ENCODE measurements at regions of chr16 and their contacts with region 1.

Region 1: GRCh38 chr16:2121853-2122252 is 13.8 kb downstream of the PKD1 start:
- DNase-seq: no peak
- H3K4me3 ChIP-seq: no peak overlapping the region
- H3K4me3 Mint-ChIP-seq: no peak overlapping the region
- H3K27ac Mint-ChIP-seq: no peak overlapping the region
- H3K4me1 ChIP-seq: no peaks in the 10 kb centered on the region
- H3K4me1 Mint-ChIP-seq: no peaks in the 10 kb centered on the region
- H3K27me3 ChIP-seq: no peaks in the 10 kb centered on the region
- H3K27me3 Mint-ChIP-seq: no peaks in the 10 kb centered on the region
- CTCF ChIP-seq: no peak

Region 2: DNA sequence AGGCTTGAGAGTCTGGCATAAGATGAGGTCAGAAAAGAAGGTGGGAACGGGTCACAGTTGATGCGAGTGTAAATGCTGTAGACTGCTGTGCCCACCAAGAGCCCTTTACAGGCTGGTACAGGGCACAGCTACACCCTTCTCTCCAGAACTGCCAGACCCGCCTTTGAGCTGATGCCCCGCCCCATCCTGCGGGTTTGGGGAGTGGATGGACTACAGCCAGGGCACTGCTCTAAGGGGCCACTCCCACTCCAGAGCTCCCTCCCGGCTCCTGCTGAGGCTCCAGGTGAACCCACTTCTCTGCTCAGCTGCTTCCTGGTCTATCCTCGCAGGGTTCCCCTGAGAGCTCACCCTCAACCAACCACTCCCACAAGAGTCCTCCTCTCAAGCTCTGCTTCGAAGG is 262.2 kb before region 1 on chr16:
- CTCF ChIA-PET with region 1: no interaction called
- POLR2A ChIA-PET with region 1: no interaction called
- intact Hi-C with region 1: no loop called
- DNase-seq: no peak
- H3K4me3 ChIP-seq: no peak overlapping the region
- H3K4me3 Mint-ChIP-seq: no peak overlapping the region
- H3K27ac Mint-ChIP-seq: no peak overlapping the region
- H3K4me1 ChIP-seq: no peaks in the 10 kb centered on the region
- H3K4me1 Mint-ChIP-seq: no peaks in the 10 kb centered on the region
- H3K27me3 ChIP-seq: no peaks in the 10 kb centered on the region
- H3K27me3 Mint-ChIP-seq: peaks cover 20% of the 10 kb centered on the region
- CTCF ChIP-seq: no peak

Region 3: GRCh38 chr16:2142942-2143877 is 21.4 kb after region 1 on chr16:
- CTCF ChIA-PET with region 1: interaction called, 14 read pairs
- POLR2A ChIA-PET with region 1: no interaction called
- intact Hi-C with region 1: no loop called
- DNase-seq: peak in 1 of 2 experiments; percentile 34
- H3K4me3 ChIP-seq: no peak overlapping the region
- H3K4me3 Mint-ChIP-seq: no peak overlapping the region
- H3K27ac Mint-ChIP-seq: no peak overlapping the region
- H3K4me1 ChIP-seq: peaks cover 5% of the 10 kb centered on the region; the same call in 1 of the 2 replicates
- H3K4me1 Mint-ChIP-seq: peaks cover 6% of the 10 kb centered on the region
- H3K27me3 ChIP-seq: no peaks in the 10 kb centered on the region
- H3K27me3 Mint-ChIP-seq: no peaks in the 10 kb centered on the region
- CTCF ChIP-seq: no peak

Measured in Caco-2 (cell line).